PC-3 (cell line): ENCODE measurements at regions of chr5 and their contacts with region 1.

Region 1: GRCh38 chr5:51960617-51961115 is 577.4 kb downstream of the ISL1 start:
- DNase-seq: peak; percentile 60
- ATAC-seq: peak; percentile 87
- H3K4me3 ChIP-seq: no peak overlapping the region
- H3K27ac ChIP-seq: no peak overlapping the region
- H3K4me1 ChIP-seq: peaks cover 7% of the 10 kb centered on the region
- H3K27me3 ChIP-seq: no peaks in the 10 kb centered on the region
- CTCF ChIP-seq: peak; percentile 78

Region 2: DNA sequence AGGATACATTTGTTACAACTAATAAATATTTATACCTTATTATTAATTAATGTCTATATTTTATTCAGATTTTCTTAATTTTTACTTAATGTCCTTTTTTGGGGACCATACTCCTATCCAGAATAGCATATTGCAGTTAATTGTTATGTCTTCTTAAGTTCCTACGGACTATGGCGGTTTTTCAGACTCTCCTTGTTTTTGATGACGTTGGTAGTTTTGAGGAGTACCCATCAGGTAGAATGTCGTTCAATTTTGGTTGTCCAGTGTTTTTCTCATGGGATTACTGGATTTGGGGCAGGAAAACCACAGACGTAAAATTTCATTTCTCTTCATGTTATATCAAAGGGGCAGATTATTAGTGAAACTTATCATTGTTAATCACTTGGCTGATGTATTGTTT is 353.7 kb before region 1 on chr5:
- CTCF ChIA-PET with region 1: interaction called, 3 read pairs
- POLR2A ChIA-PET with region 1: no interaction called
- intact Hi-C with region 1: loop called (anchors 2 kb)
- DNase-seq: no peak
- ATAC-seq: no peak
- H3K4me3 ChIP-seq: no peak overlapping the region
- H3K27ac ChIP-seq: no peak overlapping the region
- H3K4me1 ChIP-seq: no peaks in the 10 kb centered on the region
- H3K27me3 ChIP-seq: no peaks in the 10 kb centered on the region
- CTCF ChIP-seq: no peak

Region 3: GRCh38 chr5:51691546-51692079 is 269.1 kb before region 1 on chr5:
- CTCF ChIA-PET with region 1: no interaction called
- POLR2A ChIA-PET with region 1: no interaction called
- intact Hi-C with region 1: loop called (anchors 2 kb)
- DNase-seq: peak; percentile 68
- ATAC-seq: peak; percentile 95
- H3K4me3 ChIP-seq: no peak overlapping the region
- H3K27ac ChIP-seq: no peak overlapping the region
- H3K4me1 ChIP-seq: peaks cover 13% of the 10 kb centered on the region
- H3K27me3 ChIP-seq: no peaks in the 10 kb centered on the region
- CTCF ChIP-seq: no peak

Region 4: GRCh38 chr5:51860532-51861018 is 100.1 kb before region 1 on chr5:
- CTCF ChIA-PET with region 1: no interaction called
- POLR2A ChIA-PET with region 1: no interaction called
- intact Hi-C with region 1: loop called (anchors 2 kb)
- DNase-seq: peak; percentile 82
- ATAC-seq: peak; percentile 96
- H3K4me3 ChIP-seq: no peak overlapping the region
- H3K27ac ChIP-seq: peak overlapping the region; percentile 68
- H3K4me1 ChIP-seq: peaks cover 16% of the 10 kb centered on the region
- H3K27me3 ChIP-seq: no peaks in the 10 kb centered on the region
- CTCF ChIP-seq: no peak

Region 5: GRCh38 chr5:52007230-52007858 is 46.7 kb after region 1 on chr5:
- CTCF ChIA-PET with region 1: no interaction called
- POLR2A ChIA-PET with region 1: no interaction called
- intact Hi-C with region 1: loop called (anchors 2 kb)
- DNase-seq: peak; percentile 51
- ATAC-seq: peak; percentile 76
- H3K4me3 ChIP-seq: no peak overlapping the region
- H3K27ac ChIP-seq: no peak overlapping the region
- H3K4me1 ChIP-seq: no peaks in the 10 kb centered on the region
- H3K27me3 ChIP-seq: no peaks in the 10 kb centered on the region
- CTCF ChIP-seq: peak; percentile 81